Activated CD4-positive, alpha-beta T cell treated with anti-CD3 and anti-CD28 coated beads, Interleukin-2, amount 10 ng/mL, durations not matched to agents 7 days and 5 days (primary cell): ENCODE measurements at regions of chr1 and their contacts with region 1.

Region 1: GRCh38 chr1:221741711-221742554 is at the start of gene DUSP10:
- DNase-seq: peak; percentile 99
- H3K4me3 Mint-ChIP-seq: no peak within 1 kb of the TSS
- H3K27ac Mint-ChIP-seq: no peak within 1 kb of the TSS
- H3K4me1 Mint-ChIP-seq: peaks cover 28% of the 10 kb centered on the region
- H3K27me3 Mint-ChIP-seq: no peaks in the 10 kb centered on the region
- total RNA-seq, gene DUSP10: 11.3 to 12.3 TPM

Region 2: GRCh38 chr1:221725735-221726672 is 15.9 kb before region 1 on chr1:
- CTCF ChIA-PET with region 1: interaction called, 12 read pairs
- POLR2A ChIA-PET with region 1: interaction called, 6 read pairs
- DNase-seq: no peak
- H3K4me3 Mint-ChIP-seq: peak overlapping the region; percentile 8
- H3K27ac Mint-ChIP-seq: peak overlapping the region; percentile 88
- H3K4me1 Mint-ChIP-seq: peaks cover 67% of the 10 kb centered on the region
- H3K27me3 Mint-ChIP-seq: no peaks in the 10 kb centered on the region

Region 3: GRCh38 chr1:221829327-221830015 is 87.5 kb after region 1 on chr1:
- CTCF ChIA-PET with region 1: interaction called, 10 read pairs
- POLR2A ChIA-PET with region 1: interaction called, 5 read pairs
- DNase-seq: peak; percentile 49
- H3K4me3 Mint-ChIP-seq: peak overlapping the region; percentile 34
- H3K27ac Mint-ChIP-seq: peak overlapping the region; percentile 93
- H3K4me1 Mint-ChIP-seq: peaks cover 71% of the 10 kb centered on the region
- H3K27me3 Mint-ChIP-seq: no peaks in the 10 kb centered on the region